Endothelial cell of umbilical vein (primary cell): ENCODE measurements at regions of chr11 and their contacts with region 1.

Region 1: GRCh38 chr11:3109921-3110706 is 52.9 kb upstream of the CARS1 start:
- DNase-seq: peak; percentile 28
- H3K4me3 ChIP-seq: no peak overlapping the region
- H3K27ac ChIP-seq: no peak overlapping the region
- H3K4me1 ChIP-seq: no peaks in the 10 kb centered on the region
- H3K27me3 ChIP-seq: no peaks in the 10 kb centered on the region
- CTCF ChIP-seq: peak; percentile 49 to 72
- POLR2A ChIP-seq: no peak

Region 2: GRCh38 chr11:3030289-3031070 is 79.6 kb before region 1 on chr11:
- CTCF ChIA-PET with region 1: no interaction called
- POLR2A ChIA-PET with region 1: no interaction called
- dilution Hi-C with region 1: no loop called
- intact Hi-C with region 1: no loop called
- DNase-seq: no peak
- H3K4me3 ChIP-seq: no peak overlapping the region
- H3K27ac ChIP-seq: no peak overlapping the region
- H3K4me1 ChIP-seq: peaks cover 6% of the 10 kb centered on the region
- H3K27me3 ChIP-seq: no peaks in the 10 kb centered on the region
- CTCF ChIP-seq: no peak
- POLR2A ChIP-seq: no peak

Region 3: GRCh38 chr11:3220521-3221407 is 110.7 kb after region 1 on chr11:
- CTCF ChIA-PET with region 1: interaction called, 3 read pairs
- POLR2A ChIA-PET with region 1: no interaction called
- dilution Hi-C with region 1: no loop called
- intact Hi-C with region 1: loop called (anchors 1 kb)
- DNase-seq: no peak
- H3K4me3 ChIP-seq: no peak overlapping the region
- H3K27ac ChIP-seq: no peak overlapping the region
- H3K4me1 ChIP-seq: no peaks in the 10 kb centered on the region
- H3K27me3 ChIP-seq: no peaks in the 10 kb centered on the region
- CTCF ChIP-seq: no peak
- POLR2A ChIP-seq: no peak

Region 4: GRCh38 chr11:3231855-3232744 is 122.0 kb after region 1 on chr11 and contains the start of gene MRGPRE:
- CTCF ChIA-PET with region 1: no interaction called
- POLR2A ChIA-PET with region 1: no interaction called
- dilution Hi-C with region 1: no loop called
- intact Hi-C with region 1: no loop called
- DNase-seq: no peak
- H3K4me3 ChIP-seq: no peak within 1 kb of the TSS
- H3K27ac ChIP-seq: no peak within 1 kb of the TSS
- H3K4me1 ChIP-seq: no peaks in the 10 kb centered on the region
- H3K27me3 ChIP-seq: peaks cover 1 to 5% of the 10 kb centered on the region in 2 experiments
- CTCF ChIP-seq: no peak
- POLR2A ChIP-seq: no peak
- total RNA-seq, gene MRGPRE: not detected in 2 replicates